ENCODE measurements at regions of chr4 and their contacts with region 1.

Region 1: DNA sequence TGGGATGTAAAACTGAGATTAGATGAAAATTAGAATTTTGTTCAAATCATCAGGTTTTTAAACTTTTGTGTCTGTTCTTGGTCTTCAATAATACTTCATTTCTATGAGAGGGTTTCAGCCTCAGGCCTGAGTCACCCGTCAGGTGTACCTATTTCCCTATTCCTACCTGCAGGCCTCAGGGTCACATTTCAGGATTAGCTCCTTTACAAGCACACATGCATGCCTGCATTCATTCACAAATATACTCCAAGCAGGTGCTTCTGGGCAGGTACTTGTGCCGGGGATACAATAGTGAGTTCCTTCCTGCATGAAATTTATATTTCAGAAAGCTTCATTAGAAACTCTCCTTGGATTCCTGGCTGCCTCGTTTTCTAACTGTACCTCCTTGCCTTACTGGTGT is 114.9 kb downstream of the SHISA3 start:
- DNase-seq: no peak
- ATAC-seq: no peak
- H3K4me3 ChIP-seq: no peak overlapping the region
- H3K27ac ChIP-seq: no peak overlapping the region
- H3K4me1 ChIP-seq: no peaks in the 10 kb centered on the region
- H3K27me3 ChIP-seq: no peaks in the 10 kb centered on the region
- CTCF ChIP-seq: no peak
- POLR2A ChIP-seq: no peak
- RAD21 ChIP-seq: no peak

Region 2: GRCh38 chr4:42104521-42104920 is 407.7 kb before region 1 on chr4:
- CTCF ChIA-PET with region 1: no interaction called
- POLR2A ChIA-PET with region 1: no interaction called
- RAD21 ChIA-PET with region 1: no interaction called
- intact Hi-C with region 1: no loop called
- DNase-seq: no peak
- ATAC-seq: no peak
- H3K4me3 ChIP-seq: no peak overlapping the region
- H3K27ac ChIP-seq: no peak overlapping the region
- H3K4me1 ChIP-seq: no peaks in the 10 kb centered on the region
- H3K27me3 ChIP-seq: peaks cover 6% of the 10 kb centered on the region; the same call in 1 of the 2 replicates
- CTCF ChIP-seq: no peak
- POLR2A ChIP-seq: no peak
- RAD21 ChIP-seq: no peak

Region 3: DNA sequence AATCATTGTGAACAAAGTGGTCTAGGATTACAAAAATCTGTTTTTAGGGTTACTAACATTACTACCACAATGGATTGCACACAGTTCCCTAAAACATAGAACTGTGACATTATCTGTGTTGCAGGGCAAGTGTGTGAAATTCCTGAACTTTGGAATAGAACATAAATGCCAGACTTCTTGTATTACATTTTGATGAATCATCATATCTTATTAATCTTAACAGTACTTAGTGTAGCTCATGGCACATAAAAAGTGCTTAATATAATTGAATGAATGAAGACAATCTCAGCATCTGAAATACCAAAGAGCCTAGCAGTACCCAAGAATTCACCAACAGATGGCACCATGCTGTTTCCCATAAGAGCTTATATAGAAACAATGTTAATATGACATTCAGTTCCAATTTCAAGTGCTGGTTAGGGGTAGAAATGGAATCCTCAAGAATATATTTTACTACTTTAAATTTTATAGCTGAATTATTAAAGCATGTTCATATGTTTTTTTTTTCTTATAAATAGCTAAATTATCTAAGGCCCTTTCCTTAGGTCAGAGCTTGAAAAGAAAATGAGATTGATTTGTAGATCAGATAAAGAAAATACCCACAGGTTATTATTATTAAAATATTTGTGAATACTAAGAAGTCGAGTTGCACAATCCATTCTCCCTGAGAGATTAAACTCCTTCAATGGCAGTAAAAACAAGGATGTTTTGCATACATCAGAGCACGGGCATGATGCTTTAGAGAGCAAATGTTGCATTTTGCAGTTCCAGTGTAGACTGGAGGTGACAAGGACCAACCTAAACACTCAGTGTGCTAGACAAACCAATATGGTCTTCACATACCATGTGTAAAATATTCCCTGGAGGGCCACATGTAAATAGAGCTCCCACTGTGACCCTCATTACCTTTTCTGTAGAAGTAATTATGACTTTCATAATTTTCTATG is 140.6 kb before region 1 on chr4:
- CTCF ChIA-PET with region 1: interaction called, 11 read pairs
- POLR2A ChIA-PET with region 1: no interaction called
- RAD21 ChIA-PET with region 1: no interaction called
- intact Hi-C with region 1: no loop called
- DNase-seq: peak; percentile 33
- ATAC-seq: peak; percentile 55; the same call in 1 of the 2 replicates
- H3K4me3 ChIP-seq: no peak overlapping the region
- H3K27ac ChIP-seq: no peak overlapping the region
- H3K4me1 ChIP-seq: no peaks in the 10 kb centered on the region
- H3K27me3 ChIP-seq: no peaks in the 10 kb centered on the region
- CTCF ChIP-seq: peak; percentile 35 to 57 (median 51); a peak in 5 of 6 replicates
- POLR2A ChIP-seq: no peak
- RAD21 ChIP-seq: peak; percentile 54